WTC11 (cell line): ENCODE measurements at regions of chr1 and their contacts with region 1.

Region 1: GRCh38 chr1:111222308-111223125 is 5.0 kb upstream of the CHI3L2 start:
- DNase-seq: peak; percentile 93
- ATAC-seq: peak; percentile 96
- H3K4me3 Mint-ChIP-seq: no peak overlapping the region
- H3K27ac Mint-ChIP-seq: no peak overlapping the region
- H3K4me1 Mint-ChIP-seq: peaks cover 44% of the 10 kb centered on the region
- H3K27me3 Mint-ChIP-seq: no peaks in the 10 kb centered on the region
- CTCF ChIP-seq: peak; percentile 93

Region 2: DNA sequence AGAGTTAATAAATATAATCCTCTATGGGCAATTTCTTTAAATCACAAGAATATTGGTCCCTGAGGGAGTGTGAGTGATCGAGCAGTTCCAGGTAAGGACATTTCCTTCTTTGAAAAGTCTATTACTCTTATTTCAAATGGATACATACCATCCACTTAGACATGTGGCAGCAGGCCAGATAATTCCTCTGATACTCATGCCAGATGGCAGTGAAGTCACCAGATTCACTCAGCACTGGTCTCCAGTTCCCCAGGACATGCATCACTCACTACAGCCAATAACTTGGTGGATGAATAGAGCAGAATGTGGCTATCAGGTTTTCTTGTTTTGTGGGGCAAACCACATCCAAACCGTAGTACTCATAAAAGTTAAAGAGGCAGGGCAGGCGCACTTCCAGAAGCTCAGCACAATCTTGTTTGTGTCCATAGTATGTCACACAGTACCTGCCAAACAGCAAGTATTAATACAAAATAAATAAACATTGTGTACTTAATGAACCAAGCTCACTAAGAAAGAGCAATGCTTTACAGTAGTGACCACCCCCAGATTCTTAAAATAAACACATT is 423.7 kb before region 1 on chr1:
- CTCF ChIA-PET with region 1: no interaction called
- POLR2A ChIA-PET with region 1: no interaction called
- DNase-seq: no peak
- ATAC-seq: no peak
- H3K4me3 Mint-ChIP-seq: no peak overlapping the region
- H3K27ac Mint-ChIP-seq: no peak overlapping the region
- H3K4me1 Mint-ChIP-seq: no peaks in the 10 kb centered on the region
- H3K27me3 Mint-ChIP-seq: peaks cover 15% of the 10 kb centered on the region
- CTCF ChIP-seq: no peak

Region 3: GRCh38 chr1:111334169-111334568 is 111.7 kb after region 1 on chr1:
- CTCF ChIA-PET with region 1: interaction called, 38 read pairs
- POLR2A ChIA-PET with region 1: no interaction called
- DNase-seq: peak; percentile 27
- ATAC-seq: peak; percentile 72
- H3K4me3 Mint-ChIP-seq: no peak overlapping the region
- H3K27ac Mint-ChIP-seq: no peak overlapping the region
- H3K4me1 Mint-ChIP-seq: no peaks in the 10 kb centered on the region
- H3K27me3 Mint-ChIP-seq: peaks cover 4% of the 10 kb centered on the region; the same call in 1 of the 2 replicates
- CTCF ChIP-seq: no peak

Region 4: GRCh38 chr1:111346089-111346885 is 123.8 kb after region 1 on chr1:
- CTCF ChIA-PET with region 1: interaction called, 17 read pairs
- POLR2A ChIA-PET with region 1: no interaction called
- DNase-seq: peak; percentile 96
- ATAC-seq: peak; percentile 92
- H3K4me3 Mint-ChIP-seq: peak overlapping the region; percentile 87
- H3K27ac Mint-ChIP-seq: peak overlapping the region; percentile 90
- H3K4me1 Mint-ChIP-seq: peaks cover 28% of the 10 kb centered on the region
- H3K27me3 Mint-ChIP-seq: peaks cover 3% of the 10 kb centered on the region; the same call in 1 of the 2 replicates
- CTCF ChIP-seq: no peak

Region 5: GRCh38 chr1:111399792-111400610 is 177.5 kb after region 1 on chr1:
- CTCF ChIA-PET with region 1: interaction called, 63 read pairs
- POLR2A ChIA-PET with region 1: no interaction called
- DNase-seq: peak; percentile 37
- ATAC-seq: no peak
- H3K4me3 Mint-ChIP-seq: no peak overlapping the region
- H3K27ac Mint-ChIP-seq: no peak overlapping the region
- H3K4me1 Mint-ChIP-seq: no peaks in the 10 kb centered on the region
- H3K27me3 Mint-ChIP-seq: no peaks in the 10 kb centered on the region; the same call in 1 of the 2 replicates
- CTCF ChIP-seq: peak; percentile 69